ENCODE measurements at regions of chr6 and their contacts with region 1.

Region 1: GRCh38 chr6:20092071-20092566 is 120.2 kb downstream of the MBOAT1 start:
- DNase-seq: peak; percentile 37
- H3K4me3 ChIP-seq: no peak overlapping the region
- H3K27ac ChIP-seq: no peak overlapping the region
- H3K4me1 ChIP-seq: no peaks in the 10 kb centered on the region
- H3K27me3 ChIP-seq: no peaks in the 10 kb centered on the region
- CTCF ChIP-seq: peak; percentile 53 to 62

Region 2: DNA sequence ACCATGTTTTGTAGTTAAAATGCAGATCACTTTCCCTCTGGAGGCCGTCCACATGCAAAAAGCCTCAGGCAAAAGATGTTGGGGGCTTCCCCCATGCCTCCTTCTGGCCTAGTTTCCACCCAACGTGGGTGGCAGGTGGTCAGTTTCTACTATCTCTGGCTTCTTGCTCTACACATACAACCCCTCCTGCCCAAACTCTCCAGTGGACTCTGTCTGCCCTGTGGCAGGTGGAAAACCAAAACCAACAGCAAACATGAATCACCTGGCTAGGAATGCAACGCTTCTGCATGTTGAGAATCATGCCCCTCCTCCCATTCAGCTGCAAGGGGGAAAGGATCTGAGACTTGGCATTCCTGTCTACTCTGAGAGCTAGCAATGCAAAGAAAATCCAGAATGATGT is 25.4 kb after region 1 on chr6:
- CTCF ChIA-PET with region 1: no interaction called
- dilution Hi-C with region 1: no loop called
- in situ Hi-C with region 1: no loop called
- intact Hi-C with region 1: loop called (anchors 2 kb)
- DNase-seq: peak; percentile 67
- H3K4me3 ChIP-seq: no peak overlapping the region
- H3K27ac ChIP-seq: no peak overlapping the region
- H3K4me1 ChIP-seq: peaks cover 6% of the 10 kb centered on the region
- H3K27me3 ChIP-seq: no peaks in the 10 kb centered on the region
- CTCF ChIP-seq: no peak

Region 3: GRCh38 chr6:20126789-20127653 is 34.9 kb after region 1 on chr6:
- CTCF ChIA-PET with region 1: no interaction called
- dilution Hi-C with region 1: no loop called
- in situ Hi-C with region 1: no loop called
- intact Hi-C with region 1: loop called (anchors 1 kb)
- DNase-seq: peak; percentile 45
- H3K4me3 ChIP-seq: no peak overlapping the region
- H3K27ac ChIP-seq: no peak overlapping the region
- H3K4me1 ChIP-seq: no peaks in the 10 kb centered on the region
- H3K27me3 ChIP-seq: no peaks in the 10 kb centered on the region
- CTCF ChIP-seq: peak; percentile 89 to 95

Region 4: DNA sequence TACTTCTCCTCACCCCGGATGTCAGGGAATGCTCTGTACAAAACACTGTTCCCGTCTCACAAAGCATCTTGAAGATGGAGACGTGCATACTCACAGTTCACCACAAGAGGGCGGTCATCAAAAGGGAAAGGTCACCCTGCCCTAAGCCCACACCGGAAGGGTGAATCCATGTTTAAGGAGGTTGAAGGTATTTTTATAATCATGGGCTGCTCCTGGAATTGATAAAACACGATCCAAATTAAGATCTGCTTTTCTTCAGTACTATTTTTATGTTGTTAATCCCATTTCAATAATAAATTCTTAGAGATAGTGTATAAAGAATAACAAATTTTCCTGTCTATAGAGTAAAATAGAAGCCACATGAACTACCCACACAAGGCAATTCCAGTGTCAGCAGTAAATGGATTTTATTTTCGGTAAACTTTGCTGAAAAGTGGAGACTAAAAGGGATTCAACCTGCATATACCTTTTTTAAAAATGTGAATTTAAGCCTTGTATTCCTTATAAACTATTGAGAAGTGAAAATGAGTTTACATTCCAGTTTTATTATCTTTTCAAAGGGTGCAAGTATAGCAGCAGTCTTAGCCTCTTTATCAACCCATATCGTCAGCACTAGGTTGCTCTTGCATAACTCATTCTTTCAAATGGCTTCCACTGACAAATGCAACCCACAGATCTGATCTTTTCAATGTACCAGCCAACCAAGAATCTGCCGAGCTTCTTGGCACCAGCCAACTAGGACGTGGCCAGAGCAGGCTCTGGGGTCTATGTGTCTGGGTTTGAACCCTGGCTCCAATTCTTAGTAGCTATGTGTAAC is 199.9 kb after region 1 on chr6:
- CTCF ChIA-PET with region 1: no interaction called
- dilution Hi-C with region 1: no loop called
- in situ Hi-C with region 1: no loop called
- intact Hi-C with region 1: loop called (anchors 1 kb)
- DNase-seq: peak; percentile 67
- H3K4me3 ChIP-seq: no peak overlapping the region
- H3K27ac ChIP-seq: no peak overlapping the region
- H3K4me1 ChIP-seq: no peaks in the 10 kb centered on the region
- H3K27me3 ChIP-seq: no peaks in the 10 kb centered on the region
- CTCF ChIP-seq: peak; percentile 80 to 89

Region 5: GRCh38 chr6:20534295-20535262 is 442.5 kb after region 1 on chr6 and contains the start of gene CDKAL1:
- CTCF ChIA-PET with region 1: no interaction called
- dilution Hi-C with region 1: no loop called
- in situ Hi-C with region 1: loop called (anchors 10 kb)
- intact Hi-C with region 1: no loop called
- DNase-seq: peak; percentile 88
- H3K4me3 ChIP-seq: peak within 1 kb of the TSS; percentile 57 to 94 (median 67)
- H3K27ac ChIP-seq: peak within 1 kb of the TSS; percentile 88
- H3K4me1 ChIP-seq: peaks cover 10% of the 10 kb centered on the region
- H3K27me3 ChIP-seq: no peaks in the 10 kb centered on the region
- CTCF ChIP-seq: no peak
- total RNA-seq, gene CDKAL1: 12.0 to 15.2 TPM